HEK293T (cell line): ENCODE measurements at regions of chr7 and their contacts with region 1.

Region 1: GRCh38 chr7:100538654-100539435 is at the start of gene AGFG2:
- DNase-seq: peak; percentile 98

Region 2: GRCh38 chr7:100171087-100171681 is 367.7 kb before region 1 on chr7:
- CTCF ChIA-PET with region 1: no interaction called
- POLR2A ChIA-PET with region 1: no interaction called
- DNase-seq: no peak

Region 3: DNA sequence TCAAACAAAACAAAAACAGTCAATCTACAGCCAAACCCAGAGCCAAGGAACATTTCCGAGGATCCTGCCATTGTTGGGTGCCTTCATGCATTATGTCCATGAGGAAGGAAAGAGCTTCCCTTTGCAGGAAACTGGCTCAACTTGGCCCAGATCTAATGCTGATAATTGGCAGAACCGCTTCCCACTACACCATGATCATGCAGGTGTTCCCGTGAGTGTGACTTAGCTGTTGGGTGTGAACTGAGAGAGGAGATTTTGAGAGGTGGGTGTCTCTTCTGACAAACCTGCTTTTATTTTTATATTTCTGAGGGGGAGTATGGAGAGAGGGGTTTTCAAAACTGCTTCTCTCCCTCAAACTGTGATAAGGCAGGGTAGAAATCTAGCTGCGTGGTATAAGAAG is 20.3 kb after region 1 on chr7:
- CTCF ChIA-PET with region 1: interaction called, 12 read pairs
- POLR2A ChIA-PET with region 1: no interaction called
- DNase-seq: no peak